ENCODE measurements at regions of chr1 and their contacts with region 1.

Region 1: GRCh38 chr1:6727535-6727934 is 25.9 kb upstream of the DNAJC11 start:
- DNase-seq: peak in 4 of 5 donors; percentile 38 to 58 (median 43)
- ATAC-seq: peak in 3 of 4 donors; percentile 48 to 64 (median 54)
- H3K4me3 ChIP-seq: no peak overlapping the region
- H3K27ac ChIP-seq: no peak overlapping the region
- H3K4me1 ChIP-seq: peaks cover 0 to 9% (median 0%) of the 10 kb centered on the region in 12 donors
- H3K27me3 ChIP-seq: no peaks in the 10 kb centered on the region
- CTCF ChIP-seq: peak; percentile 68 to 89 (median 86)
- POLR2A ChIP-seq: no peak

Region 2: DNA sequence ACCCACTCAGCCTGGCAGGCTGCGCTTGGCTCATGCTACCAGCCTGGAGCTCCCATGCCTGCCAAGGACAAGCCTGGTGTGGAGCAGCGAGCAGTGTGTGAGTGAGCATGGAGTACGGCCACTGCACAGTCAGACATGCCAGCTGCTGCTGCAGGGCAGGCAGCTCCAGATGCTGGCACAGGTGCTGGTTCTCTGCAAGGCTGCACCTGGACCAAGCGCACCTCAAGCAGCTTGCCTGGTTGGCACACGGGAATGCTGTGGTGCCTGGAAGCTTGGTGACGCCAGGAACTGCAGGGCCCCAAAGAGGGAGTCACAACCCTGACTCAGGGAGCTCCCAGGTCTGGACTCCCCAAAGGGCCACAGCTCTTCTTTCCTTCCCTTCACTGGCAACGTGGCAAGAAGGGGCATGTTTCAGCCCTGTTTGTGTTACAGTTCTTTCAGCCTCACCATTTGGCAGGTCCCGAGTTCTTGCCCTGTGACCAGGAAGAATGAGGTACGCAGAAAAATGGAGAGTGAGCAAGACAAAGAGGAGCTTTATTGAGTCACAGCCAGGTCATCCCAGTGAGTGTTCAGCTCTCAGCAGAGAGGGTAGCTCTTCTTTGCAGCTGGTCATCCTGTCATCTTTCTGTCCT is 360.0 kb before region 1 on chr1:
- intact Hi-C with region 1: no loop called
- DNase-seq: peak in 3 of 5 donors; percentile 49 to 83 (median 66)
- ATAC-seq: peak; percentile 79 to 95 (median 93)
- H3K4me3 ChIP-seq: no peak overlapping the region
- H3K27ac ChIP-seq: peak overlapping the region in 1 of 12 donors; percentile 24
- H3K4me1 ChIP-seq: peaks cover 0 to 13% (median 5%) of the 10 kb centered on the region in 12 donors
- H3K27me3 ChIP-seq: no peaks in the 10 kb centered on the region
- CTCF ChIP-seq: no peak
- POLR2A ChIP-seq: no peak

Region 3: DNA sequence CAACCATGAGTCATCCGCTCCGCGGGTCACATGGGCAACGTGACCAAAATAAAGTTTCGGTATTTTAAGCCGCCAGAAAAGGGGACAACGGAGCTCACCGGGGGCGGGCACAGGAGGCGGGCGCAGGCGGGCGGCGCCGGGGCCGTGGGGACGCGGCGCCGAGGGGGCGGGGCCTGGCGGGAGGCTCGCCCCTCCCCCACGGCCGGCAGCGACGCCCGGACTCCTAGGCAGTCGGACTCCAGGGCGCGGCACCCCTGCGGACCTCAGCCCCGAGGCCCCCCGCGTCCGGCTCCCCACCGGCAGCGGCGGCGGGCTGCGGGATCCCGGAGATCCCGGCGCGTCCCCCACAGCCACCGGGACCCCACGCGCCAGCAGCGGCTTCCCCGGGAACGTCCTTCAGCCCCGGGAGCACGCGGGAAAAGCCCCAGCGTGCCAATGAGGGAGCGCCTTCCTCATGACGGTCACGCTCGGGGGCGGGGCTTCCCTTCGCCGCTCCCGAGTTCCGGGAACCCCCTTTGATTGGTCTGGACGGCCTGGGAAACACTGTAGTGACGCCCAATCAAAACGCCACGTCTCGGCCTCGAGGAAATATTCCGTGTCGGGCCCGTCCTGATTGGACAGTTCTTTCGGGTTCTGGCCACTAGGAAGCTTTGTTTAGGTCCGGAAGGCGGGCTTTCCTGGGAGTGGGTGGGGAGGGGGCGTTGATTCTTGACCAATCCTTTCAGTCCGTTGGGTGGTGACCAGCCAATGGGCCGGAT is 57.2 kb after region 1 on chr1:
- intact Hi-C with region 1: loop called in 3 of 10 experiments (anchors 1 to 10 kb)
- DNase-seq: peak; percentile 99 to 100 (median 100)
- ATAC-seq: peak; percentile 91 to 97 (median 96)
- H3K4me3 ChIP-seq: peak overlapping the region; percentile 29 to 96 (median 76)
- H3K27ac ChIP-seq: peak overlapping the region; percentile 91 to 100 (median 99)
- H3K4me1 ChIP-seq: peaks cover 3 to 50% (median 34%) of the 10 kb centered on the region in 12 donors
- H3K27me3 ChIP-seq: no peaks in the 10 kb centered on the region
- CTCF ChIP-seq: no peak
- POLR2A ChIP-seq: peak; percentile 22 to 66

Region 4: GRCh38 chr1:6795661-6796060 is 68.1 kb after region 1 on chr1:
- intact Hi-C with region 1: no loop called
- DNase-seq: no peak
- ATAC-seq: peak in 2 of 4 donors; percentile 16 to 19
- H3K4me3 ChIP-seq: no peak overlapping the region
- H3K27ac ChIP-seq: peak overlapping the region in 3 of 12 donors; percentile 2 to 21 (median 6)
- H3K4me1 ChIP-seq: peaks cover 2 to 69% (median 40%) of the 10 kb centered on the region in 12 donors
- H3K27me3 ChIP-seq: no peaks in the 10 kb centered on the region
- CTCF ChIP-seq: no peak
- POLR2A ChIP-seq: no peak

Region 5: DNA sequence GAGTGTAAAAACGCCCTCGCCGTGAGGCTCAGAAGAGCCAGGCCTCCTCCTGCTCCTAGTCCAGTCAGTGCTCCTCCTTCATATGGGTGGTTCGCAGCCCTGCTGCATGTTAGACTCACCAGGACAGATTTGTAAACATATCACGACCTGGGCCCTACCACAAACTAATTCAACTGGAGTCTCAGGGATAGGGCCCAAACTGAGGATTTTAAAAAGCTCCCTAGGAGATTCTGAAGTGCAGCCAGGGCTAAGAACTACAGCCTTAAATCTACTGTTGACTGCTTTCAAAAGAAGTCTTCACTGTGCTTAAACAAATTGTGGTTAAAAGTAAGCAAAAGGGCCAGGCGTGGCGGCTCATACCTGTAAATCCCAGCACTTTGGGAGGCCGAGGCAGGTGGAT is 114.8 kb after region 1 on chr1:
- intact Hi-C with region 1: no loop called
- DNase-seq: no peak
- ATAC-seq: no peak
- H3K4me3 ChIP-seq: no peak overlapping the region
- H3K27ac ChIP-seq: no peak overlapping the region
- H3K4me1 ChIP-seq: no peaks in the 10 kb centered on the region
- H3K27me3 ChIP-seq: no peaks in the 10 kb centered on the region
- CTCF ChIP-seq: no peak
- POLR2A ChIP-seq: no peak

Region 6: DNA sequence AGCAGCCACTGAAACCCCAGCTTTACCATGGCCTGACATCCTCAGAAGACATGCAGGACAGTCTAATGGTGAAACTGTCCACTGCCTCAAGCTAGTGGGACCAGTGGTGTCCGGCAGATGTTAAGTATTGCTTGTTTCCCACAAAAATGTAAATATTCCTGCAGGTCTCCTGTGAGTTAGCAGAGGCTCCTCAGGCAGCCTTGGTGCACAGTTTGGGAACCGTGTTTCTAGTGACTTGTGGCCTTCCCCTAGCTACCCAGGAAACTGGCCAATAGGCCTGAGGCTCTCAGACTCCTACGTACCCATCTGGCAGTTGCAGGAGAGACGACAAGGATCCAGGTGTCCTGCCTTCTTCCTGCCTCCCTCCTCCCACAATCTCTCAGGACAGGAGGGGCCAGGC is 200.1 kb after region 1 on chr1:
- intact Hi-C with region 1: no loop called
- DNase-seq: no peak
- ATAC-seq: no peak
- H3K4me3 ChIP-seq: no peak overlapping the region
- H3K27ac ChIP-seq: no peak overlapping the region
- H3K4me1 ChIP-seq: peaks cover 0 to 32% (median 9%) of the 10 kb centered on the region in 12 donors
- H3K27me3 ChIP-seq: no peaks in the 10 kb centered on the region
- CTCF ChIP-seq: no peak
- POLR2A ChIP-seq: no peak

Region 7: GRCh38 chr1:6962996-6963911 is 235.7 kb after region 1 on chr1:
- intact Hi-C with region 1: loop called in 1 of 10 experiments (anchors 10 kb)
- DNase-seq: peak; percentile 44 to 76 (median 74)
- ATAC-seq: peak; percentile 38 to 68 (median 58)
- H3K4me3 ChIP-seq: peak overlapping the region in 6 of 12 donors; percentile 3 to 46 (median 24)
- H3K27ac ChIP-seq: peak overlapping the region in 1 of 12 donors; percentile 44
- H3K4me1 ChIP-seq: peaks cover 0 to 34% (median 12%) of the 10 kb centered on the region in 12 donors
- H3K27me3 ChIP-seq: peaks cover 0 to 34% (median 10%) of the 10 kb centered on the region in 9 donors
- CTCF ChIP-seq: peak in 1 of 12 donors; percentile 17
- POLR2A ChIP-seq: no peak

Region 8: DNA sequence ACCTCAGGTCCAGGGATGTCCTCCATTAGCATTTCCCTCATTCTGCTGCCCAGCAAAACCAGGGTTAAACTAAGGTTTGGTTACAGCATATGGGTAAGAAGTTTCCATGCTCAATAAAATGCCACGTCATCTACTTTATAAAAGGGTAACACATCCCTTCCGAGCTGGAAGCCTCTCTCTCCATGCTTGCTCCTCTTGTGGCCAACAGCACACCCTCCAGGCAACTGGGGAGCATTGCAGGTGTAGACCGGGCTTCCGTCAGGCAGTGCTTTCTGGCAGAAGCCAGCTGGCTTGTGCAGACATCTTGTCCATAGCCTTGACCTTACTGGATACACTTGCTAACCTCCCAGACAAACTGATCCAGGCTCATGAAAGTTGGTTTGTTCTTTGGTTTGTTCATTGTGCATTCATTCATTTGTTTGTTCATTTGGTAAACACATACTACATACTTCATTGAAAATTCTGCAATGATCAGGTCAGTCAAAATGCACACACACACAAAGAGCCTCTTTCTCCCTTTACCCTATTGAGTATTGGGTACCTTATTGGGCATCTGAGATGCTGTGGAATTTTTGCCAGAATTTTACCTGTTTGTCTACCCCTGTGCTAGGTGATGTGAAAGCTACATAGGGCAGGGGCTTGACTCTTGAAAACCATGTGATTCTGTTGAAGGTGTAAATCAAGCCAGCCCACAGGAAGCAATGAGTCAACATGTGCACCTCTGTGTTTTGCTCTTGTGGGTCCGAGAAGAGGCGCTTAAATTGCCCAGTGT is 480.5 kb after region 1 on chr1:
- intact Hi-C with region 1: loop called in 3 of 10 experiments (anchors 5 to 10 kb)
- DNase-seq: peak in 4 of 5 donors; percentile 31 to 63 (median 49)
- ATAC-seq: peak; percentile 61 to 89 (median 83)
- H3K4me3 ChIP-seq: no peak overlapping the region
- H3K27ac ChIP-seq: no peak overlapping the region
- H3K4me1 ChIP-seq: no peaks in the 10 kb centered on the region
- H3K27me3 ChIP-seq: peaks cover 0 to 20% (median 0%) of the 10 kb centered on the region in 9 donors
- CTCF ChIP-seq: peak; percentile 43 to 75 (median 64)
- POLR2A ChIP-seq: no peak